ENCODE measurements at regions of chr9 and their contacts with region 1.

Region 1: DNA sequence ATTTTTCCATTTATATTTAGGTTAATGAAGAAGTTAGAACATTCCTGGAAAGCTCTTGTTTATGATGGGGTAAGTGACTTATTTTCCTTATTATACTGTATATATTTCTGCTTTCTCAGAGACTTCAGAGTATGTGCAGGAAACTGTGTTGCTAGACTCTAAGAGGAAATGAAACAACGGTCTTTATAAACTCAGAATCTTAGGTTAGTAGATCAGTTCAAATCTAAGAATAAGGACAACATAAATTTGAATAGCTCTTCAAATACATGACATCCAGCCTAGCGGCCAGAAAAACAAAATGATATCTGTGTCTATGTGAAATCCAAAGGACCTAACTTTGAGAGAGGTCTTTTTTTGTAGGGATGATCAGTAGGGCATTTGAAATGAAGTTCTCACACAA is 94.3 kb downstream of the PRKACG start:
- DNase-seq: no peak
- ATAC-seq: peak; percentile 68
- H3K4me3 ChIP-seq: no peak overlapping the region
- H3K27ac ChIP-seq: peak overlapping the region; percentile 67
- H3K4me1 ChIP-seq: peaks cover 24% of the 10 kb centered on the region
- H3K27me3 ChIP-seq: no peaks in the 10 kb centered on the region
- CTCF ChIP-seq: no peak
- EP300 ChIP-seq: no peak
- POLR2A ChIP-seq: no peak
- RAD21 ChIP-seq: no peak

Region 2: GRCh38 chr9:68869022-68869421 is 50.6 kb before region 1 on chr9:
- CTCF ChIA-PET with region 1: no interaction called
- POLR2A ChIA-PET with region 1: no interaction called
- RAD21 ChIA-PET with region 1: no interaction called
- SMC1A ChIA-PET with region 1: no interaction called
- in situ Hi-C with region 1: no loop called
- intact Hi-C with region 1: no loop called
- DNase-seq: no peak
- ATAC-seq: no peak
- H3K4me3 ChIP-seq: no peak overlapping the region
- H3K27ac ChIP-seq: no peak overlapping the region
- H3K4me1 ChIP-seq: no peaks in the 10 kb centered on the region
- H3K27me3 ChIP-seq: no peaks in the 10 kb centered on the region
- CTCF ChIP-seq: no peak
- EP300 ChIP-seq: no peak
- POLR2A ChIP-seq: no peak
- RAD21 ChIP-seq: no peak

Region 3: GRCh38 chr9:68931821-68932220 is 12.2 kb after region 1 on chr9:
- CTCF ChIA-PET with region 1: interaction called, 3 read pairs
- POLR2A ChIA-PET with region 1: interaction called, 3 read pairs
- RAD21 ChIA-PET with region 1: no interaction called
- SMC1A ChIA-PET with region 1: interaction called, 5 read pairs
- in situ Hi-C with region 1: no loop called
- intact Hi-C with region 1: loop called (anchors 2 kb)
- DNase-seq: no peak
- ATAC-seq: no peak
- H3K4me3 ChIP-seq: no peak overlapping the region
- H3K27ac ChIP-seq: peak overlapping the region; percentile 9; the same call in 1 of the 2 replicates
- H3K4me1 ChIP-seq: peaks cover 22% of the 10 kb centered on the region
- H3K27me3 ChIP-seq: no peaks in the 10 kb centered on the region
- CTCF ChIP-seq: no peak
- EP300 ChIP-seq: no peak
- POLR2A ChIP-seq: no peak
- RAD21 ChIP-seq: no peak

Measured in GM12878 (cell line).